ENCODE measurements at regions of chr4 and their contacts with region 1.

Region 1: DNA sequence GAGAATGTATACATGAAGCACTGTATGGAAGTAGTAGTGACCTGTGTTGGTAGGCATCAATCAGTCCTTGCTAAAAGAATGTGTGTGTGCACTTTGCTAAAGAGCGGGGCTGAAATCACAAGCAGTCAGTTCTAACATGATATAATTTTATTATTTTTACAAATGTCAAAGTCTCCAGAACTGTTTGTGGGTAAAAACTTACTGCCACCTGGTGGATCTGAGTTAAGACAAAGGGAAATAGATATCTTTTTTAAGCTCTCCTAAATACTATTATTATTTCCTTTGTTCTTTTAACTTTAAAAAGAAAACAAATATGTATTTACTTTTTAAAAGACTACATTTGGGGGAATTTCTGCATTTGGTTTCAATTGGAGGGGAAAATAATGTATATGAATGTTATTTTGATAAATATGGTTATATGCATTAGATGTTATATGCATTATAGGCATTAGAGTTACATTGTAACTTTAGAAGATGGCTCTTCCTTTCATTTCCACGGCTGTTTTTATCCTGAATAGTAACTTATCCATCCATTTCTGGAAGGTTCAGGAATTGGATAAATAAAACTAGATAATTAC is 7.8 kb upstream of the CLOCK start:
- DNase-seq: no peak
- ATAC-seq: peak in 3 of 4 donors; percentile 67 to 77 (median 75)
- H3K4me3 ChIP-seq: no peak overlapping the region
- H3K27ac ChIP-seq: no peak overlapping the region
- H3K4me1 ChIP-seq: no peaks in the 10 kb centered on the region
- H3K27me3 ChIP-seq: no peaks in the 10 kb centered on the region
- CTCF ChIP-seq: peak in 2 of 4 donors; percentile 16 to 19

Region 2: DNA sequence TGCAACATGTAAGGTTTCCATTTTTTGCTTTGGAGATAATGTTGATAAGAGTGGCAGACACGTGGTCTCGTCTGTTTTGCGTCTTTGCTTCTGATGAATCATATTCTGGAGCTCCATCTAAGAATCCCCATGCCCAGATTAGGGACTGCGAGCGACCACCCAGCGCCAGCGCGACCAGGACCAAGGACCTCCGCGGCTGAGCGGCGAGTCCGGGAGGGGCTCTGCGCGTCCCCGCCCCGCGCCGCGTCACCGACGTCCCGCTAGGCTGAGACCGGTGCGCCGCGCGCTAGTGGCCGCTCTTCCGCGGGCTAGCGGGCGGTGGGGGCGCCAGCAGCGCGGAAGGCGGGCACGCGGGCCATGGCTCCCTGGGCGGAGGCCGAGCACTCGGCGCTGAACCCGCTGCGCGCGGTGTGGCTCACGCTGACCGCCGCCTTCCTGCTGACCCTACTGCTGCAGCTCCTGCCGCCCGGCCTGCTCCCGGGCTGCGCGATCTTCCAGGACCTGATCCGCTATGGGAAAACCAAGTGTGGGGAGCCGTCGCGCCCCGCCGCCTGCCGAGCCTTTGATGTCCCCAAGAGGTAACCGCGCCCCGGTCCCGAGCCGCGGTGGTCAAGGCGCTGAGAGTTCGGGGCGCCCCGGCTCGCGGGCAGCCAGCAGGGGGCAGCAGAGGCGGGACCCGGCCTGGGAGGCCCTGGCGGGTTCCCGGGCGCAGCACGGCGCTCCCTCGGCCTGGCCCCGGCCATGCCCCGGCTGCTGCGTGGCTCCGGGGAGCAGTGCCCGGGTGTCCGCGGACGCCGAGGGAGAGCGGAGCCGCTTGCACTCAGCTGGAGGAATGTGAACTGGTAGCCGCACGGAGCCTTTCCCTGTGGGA is 208.3 kb before region 1 on chr4 and contains the start of gene SRD5A3:
- intact Hi-C with region 1: loop called in 1 of 3 experiments (anchors 10 kb)
- DNase-seq: peak; percentile 77 to 98 (median 90)
- ATAC-seq: peak; percentile 96 to 99 (median 96)
- H3K4me3 ChIP-seq: peak within 1 kb of the TSS; percentile 38 to 75 (median 70)
- H3K27ac ChIP-seq: peak within 1 kb of the TSS; percentile 90 to 99 (median 95)
- H3K4me1 ChIP-seq: peaks cover 0 to 9% (median 6%) of the 10 kb centered on the region in 3 donors
- H3K27me3 ChIP-seq: no peaks in the 10 kb centered on the region
- CTCF ChIP-seq: peak; percentile 92 to 97 (median 94)
- total RNA-seq, gene SRD5A3: 9.2 to 14.3 (median 10.5) TPM

Region 3: DNA sequence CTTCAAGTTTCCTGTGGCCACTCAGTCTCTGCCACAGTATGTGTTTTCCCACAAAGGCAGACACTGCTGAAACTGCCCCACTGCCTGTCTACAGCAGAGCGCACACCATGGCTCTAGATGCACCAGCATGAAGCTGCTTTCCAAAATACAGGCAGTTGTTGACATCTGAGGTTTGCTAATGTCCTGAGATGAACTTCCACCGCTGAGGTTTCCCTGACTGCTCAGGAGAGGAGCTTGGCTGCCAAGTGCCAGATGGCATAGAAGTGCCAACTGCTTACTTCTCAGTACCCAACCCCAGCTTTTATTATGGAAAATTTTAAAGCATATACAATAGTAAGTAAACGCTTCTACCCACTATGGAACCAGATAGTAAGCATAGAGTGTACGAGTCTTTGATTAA is 204.0 kb after region 1 on chr4:
- intact Hi-C with region 1: no loop called
- DNase-seq: no peak
- ATAC-seq: peak in 1 of 4 donors; percentile 22
- H3K4me3 ChIP-seq: no peak overlapping the region
- H3K27ac ChIP-seq: no peak overlapping the region
- H3K4me1 ChIP-seq: no peaks in the 10 kb centered on the region
- H3K27me3 ChIP-seq: no peaks in the 10 kb centered on the region
- CTCF ChIP-seq: no peak

Region 4: GRCh38 chr4:56048702-56049431 is 494.3 kb after region 1 on chr4:
- intact Hi-C with region 1: no loop called
- DNase-seq: peak; percentile 9 to 77 (median 30)
- ATAC-seq: peak; percentile 82 to 95 (median 91)
- H3K4me3 ChIP-seq: peak overlapping the region; percentile 33 to 60 (median 40)
- H3K27ac ChIP-seq: no peak overlapping the region
- H3K4me1 ChIP-seq: peaks cover 0 to 6% (median 6%) of the 10 kb centered on the region in 3 donors
- H3K27me3 ChIP-seq: peaks cover 0 to 19% (median 10%) of the 10 kb centered on the region in 4 donors
- CTCF ChIP-seq: no peak

Measured in pancreas (tissue), 10 donors.